Activated CD4-positive, alpha-beta memory T cell treated with anti-CD3 and anti-CD28 coated beads, Interleukin-2, amount 10 ng/mL, durations not matched to agents 7 days and 5 days (primary cell): ENCODE measurements at regions of chr14 and their contacts with region 1.

Region 1: DNA sequence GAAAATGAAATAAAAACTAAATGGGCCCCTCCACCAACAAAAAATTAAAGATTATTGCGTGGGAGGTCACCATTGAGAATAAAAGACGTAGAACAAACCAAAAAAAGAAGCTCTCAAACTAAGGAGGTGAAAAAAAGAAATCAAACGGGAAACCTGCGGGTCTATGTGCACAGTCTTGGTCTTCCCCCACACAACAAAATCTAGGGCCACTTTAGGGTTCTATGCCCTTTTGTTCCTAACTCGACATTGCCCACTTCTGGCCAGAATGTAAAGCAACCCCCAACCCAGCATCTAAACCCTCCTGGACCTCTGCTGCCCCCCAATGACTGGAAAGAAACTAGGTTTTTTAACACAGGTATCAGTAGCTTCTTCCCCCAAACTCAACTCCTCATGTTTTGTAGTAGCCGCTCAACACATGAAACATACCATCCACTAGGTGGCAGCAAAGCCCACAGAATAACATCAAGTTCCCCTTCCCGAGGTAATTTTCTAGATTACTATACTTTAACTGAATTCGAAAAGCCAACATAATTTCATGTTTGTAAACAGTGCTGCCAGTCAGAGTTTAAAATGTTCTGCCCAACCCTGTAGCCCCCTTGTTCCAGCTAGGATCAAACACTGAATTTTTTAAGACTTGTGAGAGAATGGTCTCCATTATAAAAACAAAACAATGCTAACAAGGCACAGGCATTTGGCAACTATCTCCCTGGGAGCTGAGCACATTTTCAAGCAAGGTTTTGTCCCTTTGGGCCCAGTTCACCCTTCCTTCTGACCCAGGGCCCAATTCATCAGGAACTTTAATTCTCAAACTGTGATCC is 18.7 kb downstream of the DAD1 start:
- DNase-seq: peak; percentile 91
- H3K4me3 Mint-ChIP-seq: peak overlapping the region; percentile 82
- H3K27ac Mint-ChIP-seq: peak overlapping the region; percentile 95
- H3K4me1 Mint-ChIP-seq: peaks cover 70% of the 10 kb centered on the region
- H3K27me3 Mint-ChIP-seq: no peaks in the 10 kb centered on the region

Region 2: DNA sequence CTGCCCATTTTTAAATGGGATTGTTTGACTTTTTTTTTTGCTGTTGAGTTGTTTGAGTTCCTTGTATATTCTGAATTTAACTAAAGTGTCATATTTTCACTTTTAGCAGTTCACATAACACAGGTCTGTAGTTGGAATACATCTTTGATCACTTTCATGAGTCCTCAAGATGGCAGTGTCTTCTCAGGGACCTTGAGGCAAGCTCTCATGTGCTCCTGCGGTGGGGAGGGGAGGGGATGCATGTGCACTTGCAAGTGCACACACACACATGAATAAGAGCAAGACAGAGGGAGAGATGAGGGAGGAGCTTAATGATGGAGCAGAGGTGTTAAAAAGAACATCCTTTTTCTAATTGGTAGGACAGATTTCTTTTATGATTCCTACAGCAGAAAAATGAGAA is 605.3 kb before region 1 on chr14:
- CTCF ChIA-PET with region 1: interaction called, 10 read pairs
- POLR2A ChIA-PET with region 1: no interaction called
- DNase-seq: peak; percentile 50
- H3K4me3 Mint-ChIP-seq: peak overlapping the region; percentile 19
- H3K27ac Mint-ChIP-seq: peak overlapping the region; percentile 9
- H3K4me1 Mint-ChIP-seq: peaks cover 13% of the 10 kb centered on the region
- H3K27me3 Mint-ChIP-seq: peaks cover 3% of the 10 kb centered on the region

Region 3: GRCh38 chr14:22505697-22506377 is 64.5 kb before region 1 on chr14:
- CTCF ChIA-PET with region 1: interaction called, 13 read pairs
- POLR2A ChIA-PET with region 1: interaction called, 1,110 read pairs
- DNase-seq: no peak
- H3K4me3 Mint-ChIP-seq: peak overlapping the region; percentile 83
- H3K27ac Mint-ChIP-seq: peak overlapping the region; percentile 90
- H3K4me1 Mint-ChIP-seq: peaks cover 79% of the 10 kb centered on the region
- H3K27me3 Mint-ChIP-seq: no peaks in the 10 kb centered on the region

Region 4: GRCh38 chr14:22549981-22550673 is 20.2 kb before region 1 on chr14:
- CTCF ChIA-PET with region 1: interaction called, 593 read pairs
- POLR2A ChIA-PET with region 1: interaction called, 794 read pairs
- DNase-seq: peak; percentile 79
- H3K4me3 Mint-ChIP-seq: peak overlapping the region; percentile 69
- H3K27ac Mint-ChIP-seq: peak overlapping the region; percentile 97
- H3K4me1 Mint-ChIP-seq: peaks cover 93% of the 10 kb centered on the region
- H3K27me3 Mint-ChIP-seq: no peaks in the 10 kb centered on the region

Region 5: DNA sequence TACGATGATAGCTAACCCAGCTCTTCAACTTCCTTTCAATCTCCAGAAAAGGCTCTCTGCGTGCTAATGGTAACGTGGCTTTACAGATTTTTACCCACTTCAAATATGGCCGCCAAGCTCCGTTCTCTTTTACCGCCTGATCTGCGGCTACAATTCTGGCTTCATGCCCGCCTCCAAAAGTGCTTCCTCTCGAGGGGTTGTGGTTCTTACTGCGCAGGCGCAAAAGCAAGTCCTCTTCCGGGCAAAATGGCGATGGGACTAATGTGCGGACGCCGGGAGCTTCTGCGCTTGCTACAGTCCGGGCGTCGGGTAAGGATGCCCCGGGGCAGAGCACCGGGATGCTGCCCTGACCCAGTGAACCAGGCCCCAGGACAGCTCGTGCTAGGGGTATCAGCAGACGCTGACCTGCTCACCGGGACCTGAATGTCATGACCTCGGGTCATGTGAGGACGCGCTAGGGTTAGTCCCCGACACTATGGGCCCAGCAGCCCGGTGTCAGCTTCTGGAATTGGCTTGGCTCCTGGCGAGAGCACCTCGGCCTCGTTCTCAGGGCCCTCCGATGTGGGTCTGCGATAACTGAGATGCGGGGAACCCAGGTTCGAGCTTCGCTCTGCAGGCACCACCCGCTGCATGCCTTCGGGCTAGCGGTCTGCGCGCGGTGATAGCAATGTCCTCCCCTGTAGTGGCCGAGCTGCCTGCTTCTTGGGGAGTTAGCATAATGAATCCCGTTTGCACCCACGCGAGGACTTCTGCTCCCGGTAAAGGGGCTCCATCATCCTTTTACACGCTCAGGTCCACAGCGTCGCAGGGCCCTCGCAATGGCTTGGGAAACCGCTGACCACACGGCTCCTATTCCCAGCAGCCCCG is 196.3 kb after region 1 on chr14 and contains the start of gene OXA1L:
- CTCF ChIA-PET with region 1: interaction called, 16 read pairs
- POLR2A ChIA-PET with region 1: interaction called, 16 read pairs
- DNase-seq: peak; percentile 97
- H3K4me3 Mint-ChIP-seq: peak within 1 kb of the TSS; percentile 93
- H3K27ac Mint-ChIP-seq: peak within 1 kb of the TSS; percentile 97
- H3K4me1 Mint-ChIP-seq: peaks cover 35% of the 10 kb centered on the region
- H3K27me3 Mint-ChIP-seq: no peaks in the 10 kb centered on the region
- total RNA-seq, gene OXA1L: 118 to 122 TPM

Region 6: GRCh38 chr14:22886500-22887259 is 316.3 kb after region 1 on chr14:
- CTCF ChIA-PET with region 1: interaction called, 12 read pairs
- POLR2A ChIA-PET with region 1: no interaction called
- DNase-seq: peak; percentile 85
- H3K4me3 Mint-ChIP-seq: peak overlapping the region; percentile 84
- H3K27ac Mint-ChIP-seq: peak overlapping the region; percentile 89
- H3K4me1 Mint-ChIP-seq: peaks cover 44% of the 10 kb centered on the region
- H3K27me3 Mint-ChIP-seq: peaks cover 23% of the 10 kb centered on the region